Lower leg skin (tissue), 4 donors: ENCODE measurements at regions of chr3 and their contacts with region 1.

Region 1: GRCh38 chr3:126394575-126395228 is at the start of gene CFAP100:
- DNase-seq: peak in 1 of 2 donors; percentile 83
- H3K4me3 ChIP-seq: no peak within 1 kb of the TSS
- CTCF ChIP-seq: no peak
- POLR2A ChIP-seq: no peak
- total RNA-seq, gene CFAP100: not detected

Region 2: DNA sequence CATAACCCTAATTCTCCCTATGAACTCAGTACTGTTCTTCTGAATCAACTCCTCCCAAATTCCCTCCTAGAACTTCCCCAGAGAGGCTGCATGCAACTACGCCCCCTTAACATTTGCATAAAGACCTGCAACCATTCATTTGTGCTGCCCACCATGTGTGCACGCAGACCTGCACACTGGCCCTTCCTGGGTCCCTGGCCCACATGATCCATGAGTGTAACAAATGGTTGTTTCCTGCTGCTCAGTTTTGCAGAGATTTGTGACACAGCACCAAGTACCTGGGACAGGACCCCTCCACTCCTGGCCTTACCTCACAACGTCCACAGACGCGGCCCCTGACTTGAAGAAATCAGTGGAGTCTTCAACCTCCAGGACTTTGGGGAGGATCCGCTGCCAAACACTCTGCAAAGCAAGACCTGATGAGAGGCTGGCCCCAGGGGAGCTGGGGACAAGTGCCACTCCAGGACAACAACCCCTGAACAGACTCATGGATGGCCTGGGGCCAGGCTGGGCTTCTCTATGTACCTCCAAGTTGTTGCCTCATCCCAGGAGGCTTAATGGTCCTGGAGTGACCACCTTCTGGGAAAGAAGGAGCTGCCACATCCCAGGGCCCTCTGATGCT is 248.1 kb before region 1 on chr3:
- intact Hi-C with region 1: loop called (anchors 10 kb)
- DNase-seq: peak in 1 of 2 donors; percentile 80
- H3K4me3 ChIP-seq: no peak overlapping the region
- CTCF ChIP-seq: no peak
- POLR2A ChIP-seq: no peak

Region 3: GRCh38 chr3:126208618-126209256 is 186.0 kb before region 1 on chr3:
- intact Hi-C with region 1: no loop called
- DNase-seq: peak; percentile 76 to 93
- H3K4me3 ChIP-seq: no peak overlapping the region
- CTCF ChIP-seq: no peak
- POLR2A ChIP-seq: no peak

Region 4: DNA sequence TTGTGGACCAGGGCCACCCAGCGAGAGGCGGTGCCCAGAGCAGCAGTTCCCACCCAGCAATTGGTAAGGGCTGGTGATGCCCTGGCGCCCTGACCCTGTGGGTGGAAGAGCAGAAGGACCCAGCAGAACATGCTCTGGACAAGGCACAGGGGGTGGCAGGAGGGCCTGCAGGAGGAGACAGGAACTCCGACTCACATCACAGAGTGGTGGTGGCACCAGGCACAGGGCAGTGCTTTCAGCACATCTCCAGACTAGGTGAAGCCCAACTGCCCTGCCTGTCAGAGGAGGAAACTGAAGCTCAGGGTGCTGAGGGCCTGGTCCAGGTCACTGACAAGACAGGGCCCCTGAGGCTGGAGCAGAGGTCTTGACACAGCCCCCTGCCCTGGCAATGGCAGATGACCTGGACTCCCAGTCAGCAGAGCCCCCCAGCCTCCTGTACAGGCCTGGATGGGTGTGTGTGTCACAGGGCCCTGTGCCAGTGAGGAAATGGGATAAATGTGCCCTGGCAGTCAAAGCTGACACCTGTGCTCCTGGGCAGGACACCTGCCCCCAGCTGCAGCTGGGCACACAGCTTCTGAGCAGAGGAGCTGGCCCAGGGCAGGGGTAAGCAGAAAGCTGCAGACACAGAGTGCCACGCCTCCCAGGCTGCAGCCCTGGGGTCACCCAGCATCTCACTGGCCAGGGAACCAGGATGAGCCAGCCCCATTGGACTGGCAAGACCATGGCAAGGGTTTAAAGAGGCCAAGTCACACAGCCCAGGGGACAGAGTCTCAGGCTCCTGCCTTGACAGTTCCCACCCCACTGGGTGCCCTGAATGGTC is 48.9 kb before region 1 on chr3:
- intact Hi-C with region 1: loop called (anchors 1 kb)
- DNase-seq: peak in 1 of 2 donors; percentile 81
- H3K4me3 ChIP-seq: no peak overlapping the region
- CTCF ChIP-seq: no peak
- POLR2A ChIP-seq: no peak